Naive thymus-derived CD4-positive, alpha-beta T cell (primary cell): ENCODE measurements at regions of chr4 and their contacts with region 1.

Region 1: DNA sequence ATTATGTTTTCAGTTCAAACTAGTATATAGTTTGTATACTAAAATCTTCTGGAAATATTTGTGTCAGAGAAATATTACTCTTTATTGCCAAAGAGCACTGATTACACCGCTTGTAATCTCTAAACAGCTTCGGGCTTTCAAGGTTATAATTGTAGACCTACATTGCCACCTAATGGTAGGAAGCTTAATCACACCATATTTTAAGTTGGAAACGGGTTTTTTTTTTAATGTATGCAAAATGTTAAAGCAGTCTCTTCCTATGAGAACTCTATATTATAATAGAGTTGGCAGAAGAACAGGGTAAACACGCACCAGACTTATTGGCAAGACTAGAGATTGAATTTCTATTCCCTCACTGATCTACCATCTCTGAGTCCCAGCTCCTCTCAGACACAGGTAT is 19.5 kb upstream of the NFXL1 start:
- DNase-seq: peak in 7 of 9 donors; percentile 23 to 58 (median 51)
- ATAC-seq: peak; percentile 86
- H3K4me3 ChIP-seq: no peak overlapping the region
- H3K4me3 Mint-ChIP-seq: no peak overlapping the region
- H3K27ac ChIP-seq: no peak overlapping the region
- H3K27ac Mint-ChIP-seq: no peak overlapping the region
- H3K4me1 ChIP-seq: no peaks in the 10 kb centered on the region
- H3K4me1 Mint-ChIP-seq: peaks cover 0 to 5% (median 0%) of the 10 kb centered on the region in 7 donors
- H3K27me3 ChIP-seq: no peaks in the 10 kb centered on the region
- H3K27me3 Mint-ChIP-seq: peaks cover 0 to 21% (median 7%) of the 10 kb centered on the region in 5 donors

Region 2: DNA sequence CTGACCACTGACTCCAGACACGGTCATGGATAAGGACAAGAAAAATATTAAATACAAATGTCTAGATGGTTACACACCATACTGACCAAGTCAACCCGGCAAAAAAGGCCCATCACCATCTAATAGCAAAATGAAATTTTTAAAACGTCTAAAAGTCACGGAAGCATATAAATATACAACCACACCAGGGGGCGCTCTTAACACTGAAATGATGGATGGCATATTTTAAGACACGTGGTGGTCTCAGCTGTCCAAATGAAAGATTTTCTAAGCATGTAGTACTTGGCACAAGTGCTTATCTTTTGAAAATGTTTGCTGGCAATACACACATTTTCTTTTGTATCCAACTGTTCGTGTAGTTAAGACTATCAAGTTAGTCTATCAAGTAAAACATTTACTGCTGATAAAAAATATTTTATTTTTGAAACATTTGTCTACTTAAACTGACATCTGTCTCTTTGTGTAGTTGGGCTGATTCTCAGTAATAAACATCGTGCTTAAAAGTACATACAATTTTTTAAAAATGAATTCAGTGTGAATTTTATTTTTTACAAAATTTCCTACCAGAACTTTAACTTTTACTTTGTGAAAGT is 1089.4 kb before region 1 on chr4:
- CTCF ChIA-PET with region 1: no interaction called
- POLR2A ChIA-PET with region 1: no interaction called
- intact Hi-C with region 1: loop called in 1 of 2 experiments (anchors 5 kb)
- DNase-seq: peak in 6 of 9 donors; percentile 1 to 24 (median 9)
- ATAC-seq: peak; percentile 61
- H3K4me3 ChIP-seq: no peak overlapping the region
- H3K4me3 Mint-ChIP-seq: no peak overlapping the region
- H3K27ac ChIP-seq: no peak overlapping the region
- H3K27ac Mint-ChIP-seq: no peak overlapping the region
- H3K4me1 ChIP-seq: no peaks in the 10 kb centered on the region
- H3K4me1 Mint-ChIP-seq: peaks cover 0 to 2% (median 0%) of the 10 kb centered on the region in 7 donors
- H3K27me3 ChIP-seq: no peaks in the 10 kb centered on the region
- H3K27me3 Mint-ChIP-seq: peaks cover 0 to 11% (median 5%) of the 10 kb centered on the region in 5 donors

Region 3: GRCh38 chr4:47122592-47123291 is 811.1 kb before region 1 on chr4:
- CTCF ChIA-PET with region 1: no interaction called
- POLR2A ChIA-PET with region 1: no interaction called
- intact Hi-C with region 1: loop called in 1 of 2 experiments (anchors 5 kb)
- DNase-seq: peak in 5 of 9 donors; percentile 14 to 42 (median 24)
- ATAC-seq: peak; percentile 67
- H3K4me3 ChIP-seq: no peak overlapping the region
- H3K4me3 Mint-ChIP-seq: no peak overlapping the region
- H3K27ac ChIP-seq: no peak overlapping the region
- H3K27ac Mint-ChIP-seq: no peak overlapping the region
- H3K4me1 ChIP-seq: no peaks in the 10 kb centered on the region
- H3K4me1 Mint-ChIP-seq: no peaks in the 10 kb centered on the region
- H3K27me3 ChIP-seq: peaks cover 0 to 2% of the 10 kb centered on the region in 2 donors
- H3K27me3 Mint-ChIP-seq: peaks cover 0 to 18% (median 10%) of the 10 kb centered on the region in 5 donors

Region 4: GRCh38 chr4:47598320-47598719 is 335.5 kb before region 1 on chr4:
- CTCF ChIA-PET with region 1: no interaction called
- POLR2A ChIA-PET with region 1: no interaction called
- intact Hi-C with region 1: no loop called
- DNase-seq: no peak
- ATAC-seq: no peak
- H3K4me3 ChIP-seq: no peak overlapping the region
- H3K4me3 Mint-ChIP-seq: no peak overlapping the region
- H3K27ac ChIP-seq: no peak overlapping the region
- H3K27ac Mint-ChIP-seq: no peak overlapping the region
- H3K4me1 ChIP-seq: no peaks in the 10 kb centered on the region
- H3K4me1 Mint-ChIP-seq: no peaks in the 10 kb centered on the region
- H3K27me3 ChIP-seq: no peaks in the 10 kb centered on the region
- H3K27me3 Mint-ChIP-seq: peaks cover 0 to 2% (median 0%) of the 10 kb centered on the region in 5 donors

Region 5: GRCh38 chr4:47668810-47669408 is 264.9 kb before region 1 on chr4:
- CTCF ChIA-PET with region 1: interaction called, 16 read pairs
- POLR2A ChIA-PET with region 1: no interaction called
- intact Hi-C with region 1: loop called (anchors 1 kb)
- DNase-seq: peak in 6 of 9 donors; percentile 13 to 40 (median 37)
- ATAC-seq: no peak
- H3K4me3 ChIP-seq: no peak overlapping the region
- H3K4me3 Mint-ChIP-seq: no peak overlapping the region
- H3K27ac ChIP-seq: no peak overlapping the region
- H3K27ac Mint-ChIP-seq: no peak overlapping the region
- H3K4me1 ChIP-seq: no peaks in the 10 kb centered on the region
- H3K4me1 Mint-ChIP-seq: no peaks in the 10 kb centered on the region
- H3K27me3 ChIP-seq: no peaks in the 10 kb centered on the region
- H3K27me3 Mint-ChIP-seq: peaks cover 7 to 34% (median 24%) of the 10 kb centered on the region in 5 donors

Region 6: GRCh38 chr4:47686294-47686872 is 247.5 kb before region 1 on chr4:
- CTCF ChIA-PET with region 1: interaction called, 7 read pairs
- POLR2A ChIA-PET with region 1: no interaction called
- intact Hi-C with region 1: loop called (anchors 1 kb)
- DNase-seq: peak; percentile 24 to 61 (median 48)
- ATAC-seq: peak; percentile 87
- H3K4me3 ChIP-seq: no peak overlapping the region
- H3K4me3 Mint-ChIP-seq: no peak overlapping the region
- H3K27ac ChIP-seq: no peak overlapping the region
- H3K27ac Mint-ChIP-seq: no peak overlapping the region
- H3K4me1 ChIP-seq: no peaks in the 10 kb centered on the region
- H3K4me1 Mint-ChIP-seq: no peaks in the 10 kb centered on the region
- H3K27me3 ChIP-seq: no peaks in the 10 kb centered on the region
- H3K27me3 Mint-ChIP-seq: peaks cover 0 to 27% (median 9%) of the 10 kb centered on the region in 5 donors

Region 7: GRCh38 chr4:47704693-47705325 is 229.0 kb before region 1 on chr4:
- CTCF ChIA-PET with region 1: interaction called, 3 read pairs
- POLR2A ChIA-PET with region 1: no interaction called
- intact Hi-C with region 1: loop called (anchors 1 to 2 kb)
- DNase-seq: peak in 1 of 9 donors; percentile 8
- ATAC-seq: peak; percentile 38
- H3K4me3 ChIP-seq: no peak overlapping the region
- H3K4me3 Mint-ChIP-seq: no peak overlapping the region
- H3K27ac ChIP-seq: no peak overlapping the region
- H3K27ac Mint-ChIP-seq: no peak overlapping the region
- H3K4me1 ChIP-seq: no peaks in the 10 kb centered on the region
- H3K4me1 Mint-ChIP-seq: peaks cover 0 to 2% (median 0%) of the 10 kb centered on the region in 7 donors
- H3K27me3 ChIP-seq: peaks cover 0 to 3% of the 10 kb centered on the region in 2 donors
- H3K27me3 Mint-ChIP-seq: peaks cover 5 to 42% (median 28%) of the 10 kb centered on the region in 5 donors

Region 8: DNA sequence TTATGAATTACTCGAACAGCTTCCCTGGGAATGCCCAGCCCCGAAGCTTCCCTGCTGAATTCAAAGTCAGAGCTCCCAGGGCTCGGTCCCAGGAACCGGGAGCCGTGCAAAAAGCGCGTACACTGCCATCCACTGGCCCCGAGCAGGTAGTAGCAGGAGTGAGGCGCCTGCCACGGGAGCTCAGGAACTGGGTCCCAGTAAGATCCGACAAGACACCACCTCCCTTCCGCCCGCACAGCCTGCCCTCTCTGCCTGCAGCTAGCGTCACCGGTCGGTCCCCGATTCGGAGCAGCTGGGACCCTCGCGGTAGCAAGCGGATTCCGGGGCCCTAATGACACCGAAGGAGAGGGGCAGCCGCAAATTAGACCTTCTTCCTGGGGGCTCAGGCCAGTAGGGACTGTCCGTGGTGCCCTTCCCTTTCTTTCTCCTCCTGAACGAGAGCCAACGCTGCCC is 97.2 kb before region 1 on chr4:
- CTCF ChIA-PET with region 1: no interaction called
- POLR2A ChIA-PET with region 1: interaction called, 4 read pairs
- intact Hi-C with region 1: loop called (anchors 2 to 5 kb)
- DNase-seq: peak; percentile 12 to 50 (median 31)
- ATAC-seq: peak; percentile 68
- H3K4me3 ChIP-seq: peak overlapping the region; percentile 68
- H3K4me3 Mint-ChIP-seq: peak overlapping the region; percentile 84 to 91 (median 88)
- H3K27ac ChIP-seq: no peak overlapping the region
- H3K27ac Mint-ChIP-seq: peak overlapping the region in 2 of 9 donors; percentile 9 to 17
- H3K4me1 ChIP-seq: peaks cover 6% of the 10 kb centered on the region in 2 donors
- H3K4me1 Mint-ChIP-seq: peaks cover 5 to 32% (median 24%) of the 10 kb centered on the region in 7 donors
- H3K27me3 ChIP-seq: no peaks in the 10 kb centered on the region
- H3K27me3 Mint-ChIP-seq: peaks cover 0 to 51% (median 11%) of the 10 kb centered on the region in 5 donors

Region 9: GRCh38 chr4:48017104-48017571 is 83.3 kb after region 1 on chr4:
- CTCF ChIA-PET with region 1: no interaction called
- POLR2A ChIA-PET with region 1: no interaction called
- intact Hi-C with region 1: no loop called
- DNase-seq: peak in 7 of 9 donors; percentile 4 to 70 (median 8)
- ATAC-seq: peak; percentile 12
- H3K4me3 ChIP-seq: peak overlapping the region; percentile 75
- H3K4me3 Mint-ChIP-seq: peak overlapping the region; percentile 70 to 95 (median 86)
- H3K27ac ChIP-seq: peak overlapping the region; percentile 17
- H3K27ac Mint-ChIP-seq: peak overlapping the region in 1 of 9 donors; percentile 25
- H3K4me1 ChIP-seq: peaks cover 0 to 8% of the 10 kb centered on the region in 2 donors
- H3K4me1 Mint-ChIP-seq: peaks cover 6 to 15% (median 10%) of the 10 kb centered on the region in 7 donors
- H3K27me3 ChIP-seq: no peaks in the 10 kb centered on the region
- H3K27me3 Mint-ChIP-seq: peaks cover 0 to 34% (median 7%) of the 10 kb centered on the region in 5 donors